ENCODE measurements at regions of chr10 and their contacts with region 1.

Region 1: GRCh38 chr10:68331455-68332258 is at the start of gene HNRNPH3:
- DNase-seq: peak; percentile 93 to 99
- H3K4me3 ChIP-seq: peak within 1 kb of the TSS; percentile 78
- H3K27ac ChIP-seq: peak within 1 kb of the TSS; percentile 91
- H3K4me1 ChIP-seq: peaks cover 47% of the 10 kb centered on the region
- H3K27me3 ChIP-seq: no peaks in the 10 kb centered on the region
- CTCF ChIP-seq: no peak
- total RNA-seq, gene HNRNPH3: 161 and 175 TPM in 2 replicates

Region 2: GRCh38 chr10:68074775-68075549 is 256.7 kb before region 1 on chr10 and contains the start of gene HERC4:
- CTCF ChIA-PET with region 1: no interaction called
- POLR2A ChIA-PET with region 1: no interaction called
- intact Hi-C with region 1: loop called (anchors 1 kb)
- DNase-seq: peak; percentile 82 to 92
- H3K4me3 ChIP-seq: peak within 1 kb of the TSS; percentile 97
- H3K27ac ChIP-seq: peak within 1 kb of the TSS; percentile 95
- H3K4me1 ChIP-seq: peaks cover 36% of the 10 kb centered on the region
- H3K27me3 ChIP-seq: no peaks in the 10 kb centered on the region
- CTCF ChIP-seq: no peak
- total RNA-seq, gene HERC4: 115 and 116 TPM in 2 replicates

Region 3: GRCh38 chr10:68096913-68097503 is 234.6 kb before region 1 on chr10:
- CTCF ChIA-PET with region 1: no interaction called
- POLR2A ChIA-PET with region 1: interaction called, 30 read pairs
- intact Hi-C with region 1: no loop called
- DNase-seq: peak; percentile 80 to 95
- H3K4me3 ChIP-seq: peak overlapping the region; percentile 2; the same call in 1 of the 2 replicates
- H3K27ac ChIP-seq: peak overlapping the region; percentile 100
- H3K4me1 ChIP-seq: peaks cover 73% of the 10 kb centered on the region
- H3K27me3 ChIP-seq: no peaks in the 10 kb centered on the region
- CTCF ChIP-seq: no peak

Region 4: DNA sequence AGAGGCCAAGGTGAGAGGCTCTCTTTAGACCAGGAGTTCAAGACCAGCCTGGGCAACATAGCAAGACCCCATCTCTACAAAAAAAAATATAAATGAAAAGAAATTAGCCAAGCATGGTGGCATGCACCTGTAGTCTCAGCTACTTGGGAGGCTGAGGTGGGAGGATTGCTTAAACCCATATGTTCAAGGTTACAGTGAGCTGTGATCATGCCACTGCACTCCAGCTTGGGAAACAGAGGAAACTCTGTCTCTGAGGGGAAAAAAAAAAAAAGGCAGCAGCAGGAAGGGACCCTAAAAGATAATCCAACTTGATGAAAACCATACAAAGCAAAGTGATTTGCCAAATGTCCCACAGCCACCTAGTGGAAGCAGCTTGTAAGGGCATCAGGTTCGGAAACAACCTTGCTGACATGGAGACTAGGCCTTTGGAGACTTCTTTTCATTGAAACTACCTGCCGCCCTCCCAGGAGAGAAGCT is 16.6 kb after region 1 on chr10:
- CTCF ChIA-PET with region 1: no interaction called
- POLR2A ChIA-PET with region 1: interaction called, 17 read pairs
- intact Hi-C with region 1: no loop called
- DNase-seq: peak in 1 of 2 experiments; percentile 38
- H3K4me3 ChIP-seq: no peak overlapping the region
- H3K27ac ChIP-seq: no peak overlapping the region
- H3K4me1 ChIP-seq: no peaks in the 10 kb centered on the region
- H3K27me3 ChIP-seq: no peaks in the 10 kb centered on the region
- CTCF ChIP-seq: peak; percentile 88

Region 5: GRCh38 chr10:68955832-68956532 is 624.3 kb after region 1 on chr10 and contains the start of gene DDX21:
- CTCF ChIA-PET with region 1: no interaction called
- POLR2A ChIA-PET with region 1: interaction called, 22 read pairs
- intact Hi-C with region 1: no loop called
- DNase-seq: peak; percentile 88 to 92
- H3K4me3 ChIP-seq: peak within 1 kb of the TSS; percentile 85
- H3K27ac ChIP-seq: peak within 1 kb of the TSS; percentile 86
- H3K4me1 ChIP-seq: peaks cover 29% of the 10 kb centered on the region
- H3K27me3 ChIP-seq: no peaks in the 10 kb centered on the region
- CTCF ChIP-seq: peak; percentile 81
- total RNA-seq, gene DDX21: 65.8 and 88.0 TPM in 2 replicates

Measured in PC-9 (cell line).